Sigmoid colon (tissue), 7 donors: ENCODE measurements at regions of chr2 and their contacts with region 1.

Region 1: DNA sequence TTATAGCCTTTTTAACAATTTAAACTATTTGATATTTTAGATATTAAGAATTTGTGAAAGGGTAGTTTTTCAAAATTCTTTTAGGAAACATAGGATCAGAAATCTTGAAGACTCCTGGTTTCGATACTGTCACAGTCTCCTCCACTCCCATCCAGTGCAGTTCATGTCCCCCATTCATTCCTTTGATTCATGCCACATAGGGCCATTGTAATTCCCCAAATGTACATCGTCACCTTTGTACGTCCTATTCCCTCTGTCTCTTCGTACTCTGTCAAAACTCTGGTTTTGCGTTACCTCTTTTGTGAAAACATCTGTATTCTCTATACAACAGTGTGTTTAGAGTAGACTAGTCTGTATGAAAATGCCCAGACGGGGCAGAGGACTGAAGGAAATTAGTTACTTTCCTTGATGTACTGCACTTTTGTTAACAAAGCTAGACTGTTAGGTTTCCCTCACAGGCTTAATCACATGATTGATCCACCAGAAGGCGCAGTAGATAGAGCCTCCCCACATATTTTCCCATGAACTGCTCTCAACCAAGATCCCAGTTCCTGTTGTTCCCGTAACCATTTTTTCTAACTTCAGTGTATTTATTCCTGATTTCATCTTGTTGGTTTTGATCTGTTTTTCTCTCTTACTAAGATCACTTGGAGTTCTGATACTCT is 2.5 kb downstream of the MRPL35 start:
- DNase-seq: no peak
- H3K4me3 ChIP-seq: no peak overlapping the region
- H3K27ac ChIP-seq: peak overlapping the region in 2 of 4 donors; percentile 1 to 15
- H3K4me1 ChIP-seq: peaks cover 0 to 30% (median 18%) of the 10 kb centered on the region in 4 donors
- H3K27me3 ChIP-seq: no peaks in the 10 kb centered on the region
- CTCF ChIP-seq: no peak
- EP300 ChIP-seq: no peak
- POLR2A ChIP-seq: no peak

Region 2: GRCh38 chr2:85911814-85912692 is 289.8 kb before region 1 on chr2:
- intact Hi-C with region 1: no loop called
- DNase-seq: no peak
- H3K4me3 ChIP-seq: no peak overlapping the region
- H3K27ac ChIP-seq: peak overlapping the region; percentile 23 to 55 (median 36)
- H3K4me1 ChIP-seq: no peaks in the 10 kb centered on the region
- H3K27me3 ChIP-seq: no peaks in the 10 kb centered on the region
- CTCF ChIP-seq: no peak
- EP300 ChIP-seq: no peak
- POLR2A ChIP-seq: no peak

Region 3: GRCh38 chr2:86170449-86170848 is 31.4 kb before region 1 on chr2:
- intact Hi-C with region 1: no loop called
- DNase-seq: no peak
- H3K4me3 ChIP-seq: no peak overlapping the region
- H3K27ac ChIP-seq: no peak overlapping the region
- H3K4me1 ChIP-seq: no peaks in the 10 kb centered on the region
- H3K27me3 ChIP-seq: no peaks in the 10 kb centered on the region
- CTCF ChIP-seq: no peak
- EP300 ChIP-seq: no peak
- POLR2A ChIP-seq: no peak

Region 4: DNA sequence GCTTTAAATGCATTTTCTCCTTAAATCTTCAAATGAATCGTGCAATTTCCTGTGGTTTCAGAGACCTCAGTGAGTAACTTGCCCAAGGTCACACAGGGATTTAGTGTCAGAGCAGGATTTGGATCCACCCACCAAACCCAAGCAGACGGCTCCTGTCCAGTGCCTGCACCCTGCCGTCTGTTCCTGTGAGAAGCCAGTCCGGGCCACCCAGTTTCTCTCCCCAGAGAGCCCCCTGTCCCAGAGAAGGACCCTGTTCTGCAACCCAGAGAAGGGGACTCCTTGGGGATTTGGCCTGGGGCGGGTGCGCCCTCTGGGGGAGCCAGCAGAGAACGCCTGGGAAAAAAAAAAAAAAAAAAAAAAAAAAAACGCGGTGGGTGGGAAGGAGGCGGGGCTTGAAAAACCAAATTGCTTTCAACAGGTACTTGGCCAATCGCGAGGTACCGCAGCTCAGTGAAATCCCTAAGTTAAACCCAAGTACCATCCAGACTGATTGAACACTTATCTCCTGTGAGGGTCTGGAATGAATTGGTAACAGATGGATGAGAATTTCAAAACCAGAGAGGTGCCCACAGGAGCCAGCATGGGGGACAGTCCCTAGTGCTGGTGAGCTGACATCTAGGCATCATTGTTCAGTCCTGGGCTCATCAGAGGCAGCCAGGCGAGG is 166.5 kb after region 1 on chr2:
- intact Hi-C with region 1: loop called (anchors 5 kb)
- DNase-seq: no peak
- H3K4me3 ChIP-seq: peak overlapping the region in 1 of 4 donors; percentile 2
- H3K27ac ChIP-seq: no peak overlapping the region
- H3K4me1 ChIP-seq: peaks cover 0 to 13% (median 9%) of the 10 kb centered on the region in 4 donors
- H3K27me3 ChIP-seq: no peaks in the 10 kb centered on the region
- CTCF ChIP-seq: peak; percentile 32 to 59 (median 50)
- EP300 ChIP-seq: no peak
- POLR2A ChIP-seq: no peak